ENCODE measurements at regions of chr16 and their contacts with region 1.

Region 1: DNA sequence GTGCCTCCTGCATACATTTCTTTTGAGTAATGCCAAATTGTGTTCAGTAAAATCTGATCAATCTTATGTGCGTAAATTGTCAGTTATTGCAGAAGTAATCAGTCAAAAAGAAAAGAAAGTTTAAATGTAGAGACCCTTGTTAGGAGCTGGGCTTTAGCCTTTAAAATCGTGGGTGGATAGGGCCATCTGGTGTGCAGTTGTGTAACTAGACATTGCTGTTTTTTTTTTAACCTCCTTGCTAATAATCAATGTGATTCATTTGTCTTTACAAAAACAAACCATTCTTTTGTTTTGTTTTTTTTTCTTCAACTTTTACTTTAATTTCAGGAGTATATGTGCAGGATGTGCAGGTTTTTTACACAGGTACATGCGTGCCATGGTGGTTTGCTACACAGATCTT is 5.3 kb upstream of the WWOX start:
- DNase-seq: no peak
- H3K4me3 ChIP-seq: no peak overlapping the region
- H3K27ac ChIP-seq: no peak overlapping the region
- H3K4me1 ChIP-seq: no peaks in the 10 kb centered on the region
- H3K27me3 ChIP-seq: peaks cover 0 to 11% (median 2%) of the 10 kb centered on the region in 4 experiments; a peak in 4 of 7 replicates
- CTCF ChIP-seq: peak in 2 of 3 experiments; percentile 31 to 41; a peak in 2 of 4 replicates
- EP300 ChIP-seq: no peak
- POLR2A ChIP-seq: no peak
- RAD21 ChIP-seq: peak; percentile 66 to 70

Region 2: DNA sequence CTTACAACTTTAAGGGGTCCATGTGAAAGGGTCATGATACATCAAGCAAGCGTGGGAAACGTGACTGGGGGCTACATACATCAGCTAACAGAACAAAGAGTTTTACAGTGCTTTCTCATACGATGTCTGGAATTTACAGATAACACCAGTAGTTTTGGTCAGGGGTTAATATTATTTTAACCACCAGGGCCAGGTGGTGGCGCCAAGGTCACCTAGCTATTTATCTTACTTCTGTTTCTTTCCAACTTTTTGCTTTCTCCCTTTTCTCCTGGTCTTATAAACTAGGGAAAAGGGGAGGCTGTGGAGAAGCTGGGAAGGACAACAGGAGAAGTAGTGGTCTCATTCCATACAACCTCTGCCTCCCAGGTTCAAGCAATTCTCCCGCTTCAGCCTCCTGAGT is 33.9 kb before region 1 on chr16:
- CTCF ChIA-PET with region 1: interaction called, 20 read pairs
- POLR2A ChIA-PET with region 1: no interaction called
- DNase-seq: no peak
- H3K4me3 ChIP-seq: no peak overlapping the region
- H3K27ac ChIP-seq: no peak overlapping the region
- H3K4me1 ChIP-seq: no peaks in the 10 kb centered on the region
- H3K27me3 ChIP-seq: peaks cover 1 to 10% (median 6%) of the 10 kb centered on the region in 4 experiments; a peak in 5 of 7 replicates
- CTCF ChIP-seq: peak in 2 of 3 experiments; percentile 9 to 21; a peak in 2 of 4 replicates
- EP300 ChIP-seq: no peak
- POLR2A ChIP-seq: no peak
- RAD21 ChIP-seq: peak; percentile 22 to 25; a peak in 2 of 4 replicates

Region 3: GRCh38 chr16:78142788-78143187 is 48.6 kb after region 1 on chr16:
- CTCF ChIA-PET with region 1: no interaction called
- POLR2A ChIA-PET with region 1: no interaction called
- DNase-seq: no peak
- H3K4me3 ChIP-seq: no peak overlapping the region
- H3K27ac ChIP-seq: no peak overlapping the region
- H3K4me1 ChIP-seq: peaks cover 0 to 4% (median 0%) of the 10 kb centered on the region in 4 experiments; a peak in 1 of 7 replicates
- H3K27me3 ChIP-seq: no peaks in the 10 kb centered on the region; a peak in 1 of 7 replicates
- CTCF ChIP-seq: no peak
- EP300 ChIP-seq: no peak
- POLR2A ChIP-seq: no peak
- RAD21 ChIP-seq: no peak

Measured in H1 (cell line).